Dendritic cell treated with granulocyte-macrophage colony-stimulating factor and Interleukin-4, amounts not matched to agents 40 ng/mL and 50 ng/mL, for 4 days (primary cell): ENCODE measurements at regions of chr16 and their contacts with region 1.

Region 1: DNA sequence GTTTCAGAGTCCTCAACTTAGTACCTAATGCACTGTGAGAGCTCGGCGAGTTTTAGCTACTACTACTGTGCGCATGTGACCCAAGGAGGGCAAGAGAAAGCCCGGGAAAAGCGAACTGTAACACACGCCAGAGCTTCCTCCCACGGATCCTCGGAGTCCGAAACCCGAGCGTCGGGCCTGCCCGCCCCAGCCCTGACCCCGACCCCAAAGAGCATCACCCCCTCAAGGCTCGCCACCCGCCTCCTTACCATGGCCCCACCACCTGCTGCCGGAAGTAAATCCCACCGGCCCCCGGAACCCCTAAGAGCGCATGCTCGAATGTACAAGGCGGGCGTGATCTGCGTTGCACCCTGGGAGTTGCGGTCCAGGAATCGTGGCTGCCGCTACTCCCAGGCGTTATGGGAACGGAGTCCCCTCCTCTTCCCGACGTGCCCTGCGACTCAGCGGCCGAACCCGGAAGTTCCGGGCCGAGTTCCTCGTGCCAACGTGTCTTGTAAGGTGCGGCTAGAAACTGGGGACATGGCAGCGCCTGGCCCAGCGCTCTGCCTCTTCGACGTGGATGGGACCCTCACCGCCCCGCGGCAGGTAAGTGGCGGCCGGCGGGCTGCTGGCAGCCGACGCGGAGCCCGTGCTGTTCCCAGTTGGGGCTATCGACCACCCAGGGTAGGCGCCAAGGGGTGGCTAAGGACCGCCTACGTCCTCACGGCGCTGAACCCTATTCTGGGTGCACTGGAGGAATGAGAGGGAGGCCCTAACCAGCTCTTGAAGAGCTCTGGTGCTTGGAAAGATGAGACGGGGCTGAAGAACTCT is at the starts of genes PMM2 and TMEM186:
- H3K4me3 Mint-ChIP-seq: peak within 1 kb of the TSS; percentile 92
- H3K27ac Mint-ChIP-seq: peak within 1 kb of the TSS; percentile 96
- H3K4me1 Mint-ChIP-seq: peaks cover 34% of the 10 kb centered on the region
- H3K27me3 Mint-ChIP-seq: no peaks in the 10 kb centered on the region

Region 2: DNA sequence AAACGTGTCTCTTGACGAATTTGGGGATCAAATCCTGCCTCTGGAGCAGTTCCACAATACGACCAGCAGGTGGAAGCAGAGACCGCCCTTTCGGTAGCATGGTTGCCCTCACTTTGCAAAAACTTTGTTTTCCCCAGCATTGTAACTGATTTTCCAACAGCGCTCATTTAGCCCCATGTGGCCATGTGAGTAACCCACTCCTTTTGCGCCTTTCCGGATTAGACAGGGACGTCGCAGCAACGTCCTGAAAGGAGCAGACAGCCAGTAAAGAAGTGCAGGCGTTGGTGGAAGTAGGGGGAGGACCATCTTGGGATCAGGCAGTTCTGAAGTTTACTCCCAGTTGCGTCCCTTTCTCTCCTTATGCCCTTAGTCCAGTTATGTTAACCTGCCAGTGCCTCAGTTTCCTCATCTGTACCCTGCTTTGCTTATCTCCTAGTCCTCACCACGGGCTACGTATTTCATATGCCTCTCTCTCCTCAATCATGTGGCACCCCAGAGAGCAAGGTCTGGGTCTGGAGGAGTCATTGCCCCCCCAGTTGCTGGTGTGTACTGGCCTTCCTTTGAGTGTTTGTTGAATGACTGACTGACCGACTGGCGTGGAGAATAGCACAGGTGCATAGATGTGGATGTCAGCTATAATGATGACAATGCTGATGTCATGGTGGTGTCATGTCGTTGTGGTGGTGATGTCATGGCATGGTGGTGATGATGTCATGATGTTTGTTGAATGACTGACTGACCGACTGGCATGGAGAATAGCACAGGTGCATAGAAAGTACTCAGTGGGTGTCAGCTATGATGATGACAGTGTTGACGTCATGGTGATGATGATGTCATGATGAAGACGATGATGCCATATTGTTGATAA is 229.6 kb before region 1 on chr16:
- intact Hi-C with region 1: loop called (anchors 1 kb)
- H3K4me3 Mint-ChIP-seq: no peak overlapping the region
- H3K27ac Mint-ChIP-seq: no peak overlapping the region
- H3K4me1 Mint-ChIP-seq: peaks cover 16% of the 10 kb centered on the region
- H3K27me3 Mint-ChIP-seq: peaks cover 24% of the 10 kb centered on the region

Region 3: GRCh38 chr16:8655184-8655717 is 142.3 kb before region 1 on chr16:
- intact Hi-C with region 1: loop called (anchors 5 kb)
- H3K4me3 Mint-ChIP-seq: no peak overlapping the region
- H3K27ac Mint-ChIP-seq: peak overlapping the region; percentile 47
- H3K4me1 Mint-ChIP-seq: peaks cover 12% of the 10 kb centered on the region
- H3K27me3 Mint-ChIP-seq: no peaks in the 10 kb centered on the region

Region 4: GRCh38 chr16:8674413-8675022 is 123.1 kb before region 1 on chr16 and contains the start of gene ABAT:
- intact Hi-C with region 1: loop called (anchors 2 kb)
- H3K4me3 Mint-ChIP-seq: peak within 1 kb of the TSS; percentile 87
- H3K27ac Mint-ChIP-seq: peak within 1 kb of the TSS; percentile 77
- H3K4me1 Mint-ChIP-seq: peaks cover 22% of the 10 kb centered on the region
- H3K27me3 Mint-ChIP-seq: peaks cover 4% of the 10 kb centered on the region

Region 5: DNA sequence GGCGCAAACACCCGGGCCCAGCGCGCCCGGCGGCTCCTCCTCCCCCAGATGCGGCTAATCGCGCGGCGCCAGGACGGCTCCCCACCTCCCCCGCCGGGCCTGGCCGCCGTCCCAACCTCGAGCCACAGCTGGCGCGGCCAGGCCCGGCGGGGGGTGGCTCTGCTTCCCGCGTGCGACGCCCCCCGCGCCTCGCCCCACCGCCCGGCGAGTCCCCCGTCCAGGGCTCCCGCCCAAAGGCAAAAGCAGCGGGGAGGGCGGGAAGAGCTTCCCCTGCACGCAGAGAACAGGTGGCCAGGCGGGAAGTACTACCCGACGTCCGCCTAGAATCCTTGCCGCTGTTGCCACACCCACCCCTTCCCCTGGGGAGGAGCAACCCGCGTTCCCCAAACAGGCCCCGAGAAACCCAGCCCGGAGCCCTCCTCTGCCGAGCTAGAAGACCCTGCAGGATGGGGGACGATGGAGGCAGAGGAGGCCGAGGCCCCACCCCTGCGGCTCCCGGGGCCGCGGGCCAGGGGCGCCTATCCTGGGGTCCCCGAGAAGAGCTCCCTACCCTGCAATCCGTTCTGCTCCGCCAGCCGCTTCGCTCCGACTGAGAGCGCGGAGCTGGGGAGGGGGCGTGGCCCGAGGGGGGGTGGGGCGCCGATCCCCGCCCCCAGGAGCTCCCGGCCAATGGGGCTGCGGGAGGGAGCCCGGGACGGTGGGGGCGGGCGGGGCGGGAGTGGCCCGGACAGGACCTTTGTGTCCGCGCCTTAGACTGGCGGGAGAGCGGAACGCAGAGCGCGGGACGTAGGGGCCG is 71.0 kb after region 1 on chr16 and contains the start of gene CARHSP1:
- intact Hi-C with region 1: loop called (anchors 1 kb)
- H3K4me3 Mint-ChIP-seq: peak within 1 kb of the TSS; percentile 96
- H3K27ac Mint-ChIP-seq: peak within 1 kb of the TSS; percentile 79
- H3K4me1 Mint-ChIP-seq: peaks cover 54% of the 10 kb centered on the region
- H3K27me3 Mint-ChIP-seq: peaks cover 2% of the 10 kb centered on the region